ENCODE measurements at regions of chr12 and their contacts with region 1.

Region 1: DNA sequence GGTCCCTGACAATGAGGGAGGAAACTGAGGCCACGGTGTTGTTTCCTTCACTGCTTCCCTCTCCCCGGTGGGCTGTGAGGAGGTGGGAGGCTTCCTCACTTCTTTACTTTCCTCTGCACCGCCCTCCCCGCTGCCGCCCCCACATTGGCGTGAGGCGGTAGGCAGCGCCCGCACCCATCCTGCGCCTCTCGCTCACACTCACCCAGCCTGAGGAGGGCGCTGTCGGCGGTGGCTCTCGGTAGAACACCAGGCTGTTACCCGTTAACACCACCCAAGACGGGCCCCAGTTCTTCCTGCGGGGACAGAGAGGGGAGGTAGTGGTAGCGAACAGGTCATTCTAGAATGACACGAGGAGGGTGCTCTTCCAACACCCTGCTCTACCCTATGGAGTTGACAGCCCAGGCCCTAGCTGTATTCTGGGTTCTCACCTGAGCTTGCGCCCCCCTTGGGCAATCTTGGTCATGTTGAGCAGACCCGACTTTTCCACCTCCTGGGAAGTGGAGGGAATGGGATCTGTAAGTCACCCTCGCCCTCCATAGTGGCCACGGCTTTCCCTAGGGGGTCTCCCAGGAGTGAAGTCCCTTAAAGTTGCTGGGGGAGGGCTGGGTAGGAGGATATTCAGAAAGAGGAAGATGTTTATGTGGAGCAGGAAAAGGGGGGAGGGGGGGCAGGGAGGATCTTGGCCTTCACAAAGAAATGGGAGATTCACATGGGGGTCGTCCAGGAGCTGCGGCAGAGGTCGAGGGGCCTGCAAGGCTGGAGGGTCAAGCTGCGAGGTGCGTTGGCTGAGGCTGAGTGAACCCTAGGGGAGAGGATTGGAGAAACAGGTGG is 3.3 kb downstream of the ARHGAP9 start:
- DNase-seq: peak; percentile 72
- H3K4me3 ChIP-seq: peak overlapping the region; percentile 76
- H3K27ac ChIP-seq: peak overlapping the region; percentile 91
- H3K4me1 ChIP-seq: peaks cover 54% of the 10 kb centered on the region
- CTCF ChIP-seq: peak; percentile 91

Region 2: DNA sequence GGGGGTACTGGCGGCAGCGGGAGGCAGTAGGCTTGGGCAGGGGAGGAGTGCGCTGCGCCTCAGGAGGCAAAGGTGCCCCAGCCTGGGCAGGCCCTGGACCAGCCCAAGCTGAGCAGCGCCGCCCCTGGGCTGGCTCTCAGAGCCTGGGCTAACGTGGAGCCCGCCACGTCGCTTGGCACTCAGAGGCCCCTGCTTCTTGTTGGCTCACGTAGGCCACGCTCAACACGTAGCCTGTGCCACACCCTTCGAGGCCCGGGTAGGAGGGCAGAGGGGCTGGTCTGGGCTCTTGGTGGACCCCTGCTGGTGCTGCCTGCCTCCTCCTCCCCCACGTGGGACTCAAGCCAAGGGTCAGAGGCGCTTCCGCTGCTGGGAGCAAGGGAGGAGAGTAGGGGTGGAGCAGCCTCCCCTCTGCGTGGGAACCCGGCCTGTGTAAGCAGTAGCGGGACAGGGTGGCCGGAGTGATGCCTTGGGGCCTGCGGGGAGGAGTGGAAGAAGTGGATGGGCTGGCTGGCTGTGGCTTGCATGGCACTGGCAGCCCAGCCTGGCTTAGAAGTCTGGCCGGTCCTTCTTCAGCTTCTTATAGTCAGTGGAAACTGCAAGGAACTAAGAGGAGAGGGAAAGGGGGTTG is 241.2 kb before region 1 on chr12:
- CTCF ChIA-PET with region 1: no interaction called
- POLR2A ChIA-PET with region 1: no interaction called
- intact Hi-C with region 1: no loop called
- DNase-seq: no peak
- H3K4me3 ChIP-seq: no peak overlapping the region
- H3K27ac ChIP-seq: no peak overlapping the region
- H3K4me1 ChIP-seq: peaks cover 46% of the 10 kb centered on the region
- CTCF ChIP-seq: no peak

Region 3: DNA sequence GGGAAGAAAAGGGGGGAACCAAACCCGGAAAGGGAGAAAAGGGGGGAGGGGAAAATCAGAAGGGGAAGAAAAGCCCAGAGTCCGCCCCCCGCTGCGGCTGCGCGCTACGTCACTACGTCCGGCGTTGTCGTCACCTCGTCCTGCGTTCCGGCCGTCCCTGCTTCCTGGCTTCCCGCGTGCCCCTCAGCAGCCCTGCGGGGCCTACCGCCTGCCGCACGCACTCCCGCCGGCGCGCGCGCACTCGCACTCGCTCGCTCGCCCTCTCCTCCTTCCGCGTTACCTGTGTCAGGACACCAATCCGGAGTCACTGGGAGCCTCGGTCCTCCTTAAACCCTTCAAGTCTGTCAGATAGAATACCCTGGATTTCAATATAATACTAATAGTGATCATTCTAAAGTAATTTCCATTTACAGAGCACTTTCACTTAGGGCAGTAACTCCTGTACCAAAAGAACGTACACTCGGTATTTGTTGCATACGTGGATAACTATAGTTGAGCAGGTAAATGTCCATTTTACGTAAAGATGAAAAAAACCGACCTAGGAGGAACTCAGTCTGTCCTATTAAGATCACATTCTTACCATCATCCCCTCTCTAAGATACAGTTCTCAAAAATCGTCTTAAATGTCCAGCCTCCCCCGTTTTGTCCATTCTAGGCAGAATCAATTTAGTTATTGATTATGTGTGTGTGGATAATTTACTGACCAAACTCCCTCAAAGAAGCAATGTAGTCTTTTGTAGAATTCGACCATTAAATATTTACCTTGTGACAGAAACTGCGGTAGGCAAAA is 45.3 kb before region 1 on chr12 and contains the start of gene R3HDM2:
- CTCF ChIA-PET with region 1: no interaction called
- POLR2A ChIA-PET with region 1: no interaction called
- intact Hi-C with region 1: loop called (anchors 1 kb)
- DNase-seq: peak; percentile 96
- H3K4me3 ChIP-seq: peak within 1 kb of the TSS; percentile 70
- H3K27ac ChIP-seq: peak within 1 kb of the TSS; percentile 59
- H3K4me1 ChIP-seq: peaks cover 30% of the 10 kb centered on the region
- CTCF ChIP-seq: no peak
- total RNA-seq, gene R3HDM2: 15.0 and 25.8 TPM in 2 replicates

Region 4: DNA sequence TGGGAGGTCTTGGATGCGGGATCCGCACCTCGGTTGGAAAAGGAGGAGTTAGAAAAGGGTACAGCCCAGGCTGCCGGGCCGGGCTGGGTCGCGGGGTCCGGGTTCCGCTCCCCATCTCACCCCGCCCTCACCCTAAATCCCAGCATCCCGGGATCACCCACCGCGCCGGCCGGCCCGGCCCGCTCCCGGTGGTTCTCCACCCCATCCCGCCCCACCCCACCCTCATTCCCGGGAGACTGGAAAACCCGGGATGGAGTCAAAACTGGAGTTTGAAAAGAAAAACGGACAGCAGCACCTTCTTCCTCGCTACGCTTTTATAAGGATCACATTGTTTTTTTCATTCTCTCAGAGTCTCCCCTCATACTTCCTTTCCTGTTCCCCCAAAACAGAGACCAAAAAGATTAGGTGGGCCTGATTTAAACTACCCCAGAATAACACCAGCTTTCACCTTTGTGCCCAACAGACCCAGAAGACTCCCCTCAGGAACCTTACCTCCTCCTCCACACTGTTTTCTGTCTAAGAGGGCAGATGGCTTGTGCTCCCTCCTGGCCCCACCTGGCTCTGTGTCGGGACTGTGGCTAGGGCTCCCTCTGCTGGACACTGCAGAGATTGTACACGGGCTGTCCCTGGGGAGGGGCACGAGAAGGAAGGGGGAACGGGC is 14.0 kb before region 1 on chr12:
- CTCF ChIA-PET with region 1: interaction called, 6 read pairs
- POLR2A ChIA-PET with region 1: interaction called, 10 read pairs
- intact Hi-C with region 1: loop called (anchors 1 kb)
- DNase-seq: peak; percentile 94
- H3K4me3 ChIP-seq: peak overlapping the region; percentile 77
- H3K27ac ChIP-seq: peak overlapping the region; percentile 67
- H3K4me1 ChIP-seq: peaks cover 26% of the 10 kb centered on the region
- CTCF ChIP-seq: peak; percentile 98

Region 5: GRCh38 chr12:57661376-57661775 is 185.0 kb after region 1 on chr12:
- CTCF ChIA-PET with region 1: no interaction called
- POLR2A ChIA-PET with region 1: no interaction called
- intact Hi-C with region 1: no loop called
- DNase-seq: peak; percentile 7
- H3K4me3 ChIP-seq: no peak overlapping the region
- H3K27ac ChIP-seq: no peak overlapping the region
- H3K4me1 ChIP-seq: no peaks in the 10 kb centered on the region
- CTCF ChIP-seq: no peak

Measured in OCI-LY7 (cell line).